CD8-positive, alpha-beta memory T cell (primary cell): ENCODE measurements at regions of chr17 and their contacts with region 1.

Region 1: GRCh38 chr17:50139950-50140871 is 10.3 kb upstream of the SAMD14 start:
- DNase-seq: peak; percentile 74 to 86 (median 76)
- H3K4me3 ChIP-seq: peak overlapping the region; percentile 26
- H3K4me3 Mint-ChIP-seq: peak overlapping the region; percentile 52 to 84 (median 76)
- H3K27ac ChIP-seq: peak overlapping the region; percentile 17
- H3K27ac Mint-ChIP-seq: peak overlapping the region; percentile 78 to 97 (median 90)
- H3K4me1 ChIP-seq: peaks cover 59% of the 10 kb centered on the region
- H3K4me1 Mint-ChIP-seq: peaks cover 55 to 74% (median 67%) of the 10 kb centered on the region in 3 donors
- H3K27me3 ChIP-seq: no peaks in the 10 kb centered on the region
- H3K27me3 Mint-ChIP-seq: peaks cover 0 to 1% of the 10 kb centered on the region in 2 donors

Region 2: DNA sequence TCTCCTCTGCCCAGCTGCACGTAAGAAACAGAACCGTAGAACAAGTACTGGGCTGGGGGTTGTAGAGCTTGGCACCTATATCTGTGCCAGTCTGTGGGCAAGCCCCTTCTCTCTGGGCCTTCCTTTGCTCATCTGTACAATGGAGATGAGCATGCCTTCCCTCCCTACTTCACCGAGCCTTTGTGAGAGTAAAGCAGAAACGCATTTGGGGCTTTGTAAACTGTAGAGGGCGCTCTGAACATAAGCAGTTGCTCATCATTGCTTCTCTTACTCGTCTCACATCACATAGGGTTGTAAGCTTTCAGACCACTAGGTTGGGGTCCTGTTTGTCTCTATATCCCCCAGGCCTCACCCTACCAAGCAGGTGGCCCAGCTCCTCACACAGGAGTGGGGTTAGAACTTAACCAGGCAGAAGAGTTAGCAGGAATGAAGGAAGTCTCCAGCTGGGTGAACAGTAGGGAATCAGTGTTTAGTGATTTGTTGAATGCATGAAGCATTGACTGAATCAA is 25.3 kb before region 1 on chr17:
- CTCF ChIA-PET with region 1: interaction called, 13 read pairs
- POLR2A ChIA-PET with region 1: no interaction called
- DNase-seq: no peak
- H3K4me3 ChIP-seq: no peak overlapping the region
- H3K4me3 Mint-ChIP-seq: peak overlapping the region in 1 of 7 donors; percentile 4
- H3K27ac ChIP-seq: no peak overlapping the region
- H3K27ac Mint-ChIP-seq: peak overlapping the region in 3 of 8 donors; percentile 10 to 69 (median 49)
- H3K4me1 ChIP-seq: no peaks in the 10 kb centered on the region
- H3K4me1 Mint-ChIP-seq: peaks cover 5 to 11% (median 5%) of the 10 kb centered on the region in 3 donors
- H3K27me3 ChIP-seq: peaks cover 5% of the 10 kb centered on the region
- H3K27me3 Mint-ChIP-seq: peaks cover 13 to 44% of the 10 kb centered on the region in 2 donors

Region 3: DNA sequence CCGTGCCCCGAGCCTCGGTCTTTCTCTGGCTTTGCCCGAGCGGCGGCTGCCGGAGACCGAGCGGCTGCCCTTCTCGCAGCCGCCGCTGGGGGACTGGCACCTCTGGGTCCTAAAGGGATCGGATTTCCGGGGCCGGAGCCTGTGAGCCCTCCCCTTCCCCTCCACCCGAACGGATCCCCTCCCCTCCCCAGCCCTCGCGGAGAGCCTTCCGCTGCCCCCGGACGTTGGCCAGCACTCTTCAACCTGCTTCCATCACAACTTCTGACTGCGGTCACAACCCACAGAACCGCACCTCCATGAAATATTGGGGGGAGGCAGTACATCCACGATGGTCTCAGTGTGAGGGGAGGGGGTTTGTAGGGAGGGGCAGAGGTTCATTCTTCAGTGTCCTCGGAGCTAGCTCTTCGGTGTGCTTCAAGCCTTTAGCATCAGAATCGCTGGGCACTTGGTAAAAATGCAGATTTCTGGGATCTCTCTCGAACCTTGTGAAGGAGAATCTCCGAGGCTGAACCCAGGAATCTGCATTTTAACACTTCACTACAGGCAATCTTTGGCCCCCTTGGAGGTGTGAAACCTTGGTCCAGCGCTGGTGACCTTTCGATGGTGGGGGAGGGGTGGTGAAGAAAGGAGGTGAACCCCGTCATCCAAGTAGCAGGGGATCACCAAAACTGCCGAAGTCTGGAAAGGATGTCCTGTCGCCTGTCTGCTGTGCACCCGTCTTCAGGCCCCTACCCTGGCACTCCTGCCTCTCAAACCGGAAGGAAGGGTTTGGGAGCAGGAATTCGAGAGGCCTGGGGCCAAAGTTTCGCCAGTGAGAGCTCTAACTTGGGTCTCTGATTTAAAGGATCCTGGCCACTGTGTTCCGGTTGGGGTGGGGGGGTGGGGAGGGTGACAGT is 11.1 kb after region 1 on chr17:
- CTCF ChIA-PET with region 1: interaction called, 50 read pairs
- POLR2A ChIA-PET with region 1: interaction called, 7 read pairs
- DNase-seq: peak; percentile 80 to 89 (median 83)
- H3K4me3 ChIP-seq: peak overlapping the region; percentile 80
- H3K4me3 Mint-ChIP-seq: peak overlapping the region; percentile 86 to 100 (median 90)
- H3K27ac ChIP-seq: peak overlapping the region; percentile 79
- H3K27ac Mint-ChIP-seq: peak overlapping the region; percentile 75 to 99 (median 94)
- H3K4me1 ChIP-seq: peaks cover 53% of the 10 kb centered on the region
- H3K4me1 Mint-ChIP-seq: peaks cover 27 to 41% (median 34%) of the 10 kb centered on the region in 3 donors
- H3K27me3 ChIP-seq: no peaks in the 10 kb centered on the region
- H3K27me3 Mint-ChIP-seq: peaks cover 0 to 3% of the 10 kb centered on the region in 2 donors

Region 4: DNA sequence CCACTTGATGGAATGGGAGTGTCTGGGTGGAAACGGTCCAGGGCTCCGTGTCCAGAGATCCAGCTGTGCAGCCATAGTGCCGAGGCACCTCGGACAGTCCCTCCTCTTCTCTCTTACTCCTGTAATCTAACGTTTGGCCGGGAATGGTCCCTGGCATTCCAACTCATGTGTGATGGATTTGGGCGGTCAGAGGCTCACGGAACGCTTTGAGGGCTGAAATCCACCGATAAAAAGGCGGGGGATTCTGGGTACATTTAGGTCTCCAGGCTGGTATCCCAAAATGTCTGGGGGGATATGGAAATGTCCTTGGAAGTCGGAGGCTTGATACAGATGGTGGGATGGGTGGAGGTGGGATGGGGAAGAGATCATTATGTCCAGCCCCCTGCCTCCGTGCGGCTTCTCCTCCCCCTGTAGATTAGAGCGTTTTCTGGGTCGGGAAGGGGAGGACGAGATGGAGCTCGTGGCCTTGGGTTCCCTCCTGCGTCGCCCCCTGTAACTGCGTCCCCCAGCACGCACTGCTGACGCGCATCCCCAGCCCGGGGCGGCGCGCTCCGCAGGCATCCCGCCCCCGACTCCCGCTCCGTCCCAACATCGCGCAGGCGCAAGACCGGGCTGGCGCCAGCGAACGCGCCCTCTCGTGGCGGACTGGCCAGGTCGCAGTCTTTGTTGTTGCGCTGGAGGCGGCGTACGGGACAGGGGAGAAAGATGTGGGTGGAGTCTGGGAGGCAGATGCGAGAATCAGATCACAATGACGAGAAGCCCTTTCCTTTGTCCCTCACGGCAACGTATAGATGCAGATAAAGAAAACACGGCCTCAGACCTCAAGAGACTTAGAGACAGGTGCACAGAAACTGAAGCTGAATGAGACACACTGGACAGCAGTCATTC is 21.1 kb after region 1 on chr17:
- CTCF ChIA-PET with region 1: interaction called, 52 read pairs
- POLR2A ChIA-PET with region 1: interaction called, 6 read pairs
- DNase-seq: peak; percentile 93 to 96 (median 93)
- H3K4me3 ChIP-seq: peak overlapping the region; percentile 78
- H3K4me3 Mint-ChIP-seq: peak overlapping the region; percentile 1 to 82 (median 54)
- H3K27ac ChIP-seq: no peak overlapping the region
- H3K27ac Mint-ChIP-seq: peak overlapping the region; percentile 21 to 96 (median 89)
- H3K4me1 ChIP-seq: peaks cover 34% of the 10 kb centered on the region
- H3K4me1 Mint-ChIP-seq: peaks cover 24 to 32% (median 29%) of the 10 kb centered on the region in 3 donors
- H3K27me3 ChIP-seq: no peaks in the 10 kb centered on the region
- H3K27me3 Mint-ChIP-seq: peaks cover 0 to 3% of the 10 kb centered on the region in 2 donors

Region 5: GRCh38 chr17:50169121-50169764 is 29.0 kb after region 1 on chr17:
- CTCF ChIA-PET with region 1: interaction called, 16 read pairs
- POLR2A ChIA-PET with region 1: no interaction called
- DNase-seq: peak; percentile 44 to 82 (median 68)
- H3K4me3 ChIP-seq: peak overlapping the region; percentile 52
- H3K4me3 Mint-ChIP-seq: peak overlapping the region; percentile 47 to 88 (median 66)
- H3K27ac ChIP-seq: peak overlapping the region; percentile 11
- H3K27ac Mint-ChIP-seq: peak overlapping the region; percentile 59 to 90 (median 84)
- H3K4me1 ChIP-seq: peaks cover 15% of the 10 kb centered on the region
- H3K4me1 Mint-ChIP-seq: peaks cover 8 to 13% (median 11%) of the 10 kb centered on the region in 3 donors
- H3K27me3 ChIP-seq: no peaks in the 10 kb centered on the region
- H3K27me3 Mint-ChIP-seq: peaks cover 0 to 5% of the 10 kb centered on the region in 2 donors

Region 6: GRCh38 chr17:50177983-50178834 is 38.0 kb after region 1 on chr17:
- CTCF ChIA-PET with region 1: interaction called, 13 read pairs
- POLR2A ChIA-PET with region 1: no interaction called
- DNase-seq: peak in 4 of 5 donors; percentile 11 to 59 (median 23)
- H3K4me3 ChIP-seq: no peak overlapping the region
- H3K4me3 Mint-ChIP-seq: peak overlapping the region in 2 of 7 donors; percentile 63 to 80
- H3K27ac ChIP-seq: no peak overlapping the region
- H3K27ac Mint-ChIP-seq: peak overlapping the region in 3 of 8 donors; percentile 20 to 64 (median 26)
- H3K4me1 ChIP-seq: peaks cover under 1% of the 10 kb centered on the region
- H3K4me1 Mint-ChIP-seq: peaks cover 7 to 11% (median 10%) of the 10 kb centered on the region in 3 donors
- H3K27me3 ChIP-seq: no peaks in the 10 kb centered on the region
- H3K27me3 Mint-ChIP-seq: no peaks in the 10 kb centered on the region